Activated CD4-positive, alpha-beta T cell treated with anti-CD3 and anti-CD28 coated beads, Interleukin-2, amount 10 ng/mL, durations not matched to agents 24 days and 14 days (primary cell): ENCODE measurements at regions of chr2 and their contacts with region 1.

Region 1: DNA sequence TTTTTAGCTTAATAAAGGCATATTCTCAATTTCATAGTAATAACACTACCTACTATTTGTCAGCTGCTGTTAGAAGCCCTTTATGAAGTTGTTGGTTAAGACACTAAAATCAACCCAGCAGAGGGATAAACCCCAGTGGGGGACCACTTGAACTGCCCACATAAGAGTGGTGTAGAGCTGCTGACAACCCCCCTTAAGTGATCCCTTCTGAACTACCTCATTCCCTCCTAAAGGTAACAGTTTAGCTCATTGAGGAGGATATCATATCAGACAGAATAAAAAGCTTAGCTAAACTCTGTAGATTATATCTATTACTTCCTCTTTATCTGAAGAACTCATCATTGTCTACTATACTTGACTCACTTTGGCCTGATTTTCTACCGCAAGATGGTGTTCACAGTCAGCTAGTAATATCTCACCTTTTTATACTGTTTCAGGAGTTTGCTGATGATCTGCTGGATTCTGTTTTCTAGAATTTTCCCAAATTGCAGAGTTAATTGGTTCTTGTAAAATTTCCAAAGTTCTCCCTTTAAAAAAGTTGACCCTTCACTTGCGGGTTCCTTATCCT is 16.2 kb downstream of the GALM start:
- DNase-seq: no peak
- H3K4me3 Mint-ChIP-seq: peak overlapping the region; percentile 61
- H3K27ac Mint-ChIP-seq: peak overlapping the region; percentile 79
- H3K4me1 Mint-ChIP-seq: peaks cover 52% of the 10 kb centered on the region
- H3K27me3 Mint-ChIP-seq: no peaks in the 10 kb centered on the region

Region 2: DNA sequence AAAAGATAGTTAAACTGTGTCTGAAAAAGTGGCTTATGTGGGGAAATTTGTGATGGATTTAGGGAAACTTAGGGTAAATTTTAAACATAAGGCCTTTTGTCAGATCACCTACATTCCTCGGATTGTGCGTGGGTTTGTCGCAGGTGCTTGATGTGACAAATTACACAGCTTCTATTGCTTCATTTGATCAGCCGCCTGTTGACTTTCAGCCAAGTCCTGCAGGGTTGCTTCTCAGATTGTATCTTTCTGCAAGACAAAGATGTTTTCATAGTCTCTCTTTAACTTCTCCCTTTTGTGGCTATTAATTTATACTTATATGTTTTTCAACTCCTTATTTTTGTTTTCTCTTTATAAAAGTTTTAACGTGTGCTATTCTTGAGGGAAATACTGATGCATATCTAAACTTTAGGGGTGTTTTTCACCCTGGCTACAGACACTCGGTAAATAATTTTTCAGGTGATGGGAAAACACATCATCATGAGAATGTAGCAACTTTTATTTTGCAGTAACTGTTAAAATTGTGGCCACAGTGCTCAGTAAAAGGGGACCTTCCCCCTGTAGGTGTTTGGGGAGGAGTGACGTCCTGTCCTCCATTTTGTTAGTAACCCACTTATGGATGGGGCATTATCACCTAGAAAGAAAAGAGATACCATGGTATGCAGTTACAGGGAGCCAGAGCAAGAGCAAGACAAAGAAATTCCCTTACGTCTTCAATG is 15.2 kb after region 1 on chr2:
- intact Hi-C with region 1: loop called (anchors 2 kb)
- DNase-seq: no peak
- H3K4me3 Mint-ChIP-seq: no peak overlapping the region
- H3K27ac Mint-ChIP-seq: peak overlapping the region; percentile 81
- H3K4me1 Mint-ChIP-seq: peaks cover 58% of the 10 kb centered on the region
- H3K27me3 Mint-ChIP-seq: no peaks in the 10 kb centered on the region